ENCODE measurements at regions of chr12 and their contacts with region 1.

Region 1: DNA sequence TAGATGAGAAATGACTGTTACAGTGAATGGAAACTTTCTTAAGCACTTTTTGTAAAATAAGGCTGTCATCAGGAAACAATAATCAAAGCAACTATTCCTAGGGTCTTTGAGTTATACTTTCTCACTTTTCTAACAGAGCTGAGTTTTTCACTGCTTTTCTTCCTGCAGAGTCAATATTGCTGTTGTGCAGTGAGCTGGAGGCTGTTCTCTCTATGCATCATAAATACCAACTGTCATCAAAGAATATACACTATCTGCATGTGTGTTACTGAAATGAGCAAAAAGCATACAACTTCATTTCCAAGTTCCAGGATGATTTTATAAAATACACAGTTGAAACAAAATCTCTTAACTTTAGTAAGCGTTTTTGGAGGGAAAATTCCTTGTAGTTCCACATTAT is 110.4 kb upstream of the CPSF6 start:
- DNase-seq: no peak
- H3K4me3 ChIP-seq: no peak overlapping the region
- H3K27ac ChIP-seq: no peak overlapping the region
- H3K4me1 ChIP-seq: no peaks in the 10 kb centered on the region
- H3K27me3 ChIP-seq: no peaks in the 10 kb centered on the region
- CTCF ChIP-seq: no peak
- POLR2A ChIP-seq: no peak

Region 2: GRCh38 chr12:69083689-69084088 is 45.3 kb before region 1 on chr12:
- intact Hi-C with region 1: no loop called
- DNase-seq: no peak
- H3K4me3 ChIP-seq: no peak overlapping the region
- H3K27ac ChIP-seq: no peak overlapping the region
- H3K4me1 ChIP-seq: no peaks in the 10 kb centered on the region
- H3K27me3 ChIP-seq: no peaks in the 10 kb centered on the region
- CTCF ChIP-seq: no peak
- POLR2A ChIP-seq: no peak

Region 3: DNA sequence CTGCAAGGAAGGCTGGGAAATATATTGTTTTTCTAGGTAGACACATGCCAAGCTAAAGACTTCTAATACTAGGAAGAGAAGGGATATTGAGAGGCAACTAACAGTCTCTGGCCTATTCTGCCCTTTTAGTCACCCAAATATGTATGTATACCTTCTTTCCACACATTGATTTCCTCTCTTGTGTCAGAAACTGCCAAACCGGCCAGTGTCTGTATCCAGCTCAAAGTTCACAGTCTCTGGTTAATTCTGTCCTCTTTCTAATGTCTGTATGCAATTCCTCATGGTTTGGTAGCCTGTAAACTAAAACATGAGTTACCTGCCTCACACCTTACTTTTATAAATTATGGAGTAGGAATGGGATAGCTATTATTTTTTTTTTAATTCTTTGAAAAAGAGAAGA is 85.2 kb after region 1 on chr12:
- intact Hi-C with region 1: no loop called
- DNase-seq: no peak
- H3K4me3 ChIP-seq: no peak overlapping the region
- H3K27ac ChIP-seq: no peak overlapping the region
- H3K4me1 ChIP-seq: no peaks in the 10 kb centered on the region
- H3K27me3 ChIP-seq: no peaks in the 10 kb centered on the region
- CTCF ChIP-seq: no peak
- POLR2A ChIP-seq: no peak

Region 4: GRCh38 chr12:70774055-70774454 is 1645.0 kb after region 1 on chr12:
- intact Hi-C with region 1: no loop called
- DNase-seq: no peak
- H3K4me3 ChIP-seq: no peak overlapping the region
- H3K27ac ChIP-seq: no peak overlapping the region
- H3K4me1 ChIP-seq: no peaks in the 10 kb centered on the region
- H3K27me3 ChIP-seq: no peaks in the 10 kb centered on the region
- CTCF ChIP-seq: no peak
- POLR2A ChIP-seq: no peak

Region 5: GRCh38 chr12:70928071-70928470 is 1799.1 kb after region 1 on chr12:
- intact Hi-C with region 1: loop called (anchors 5 kb)
- DNase-seq: no peak
- H3K4me3 ChIP-seq: no peak overlapping the region
- H3K27ac ChIP-seq: no peak overlapping the region
- H3K4me1 ChIP-seq: no peaks in the 10 kb centered on the region
- H3K27me3 ChIP-seq: no peaks in the 10 kb centered on the region
- CTCF ChIP-seq: no peak
- POLR2A ChIP-seq: no peak

Measured in breast epithelium (tissue), 4 donors.